B cell (primary cell): ENCODE measurements at regions of chr6 and their contacts with region 1.

Region 1: DNA sequence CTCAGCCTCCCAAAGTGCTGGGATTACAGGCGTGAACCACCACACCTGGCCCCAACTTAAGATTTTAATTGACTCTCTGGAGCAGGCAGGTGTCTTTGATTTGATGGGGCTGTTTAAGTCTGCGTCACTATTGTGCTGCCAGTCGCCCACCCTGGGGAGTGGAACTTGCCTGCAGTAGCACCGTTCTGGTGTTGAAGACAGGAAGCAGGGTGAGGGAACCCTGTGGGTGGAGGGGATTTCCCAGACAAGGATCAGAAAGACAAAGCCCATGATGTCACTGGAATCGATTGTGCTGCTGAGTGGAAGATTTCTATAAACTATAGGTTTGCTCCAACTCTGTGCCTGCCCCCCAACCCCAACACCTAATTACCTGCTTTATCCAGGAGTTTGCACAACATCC is 11.0 kb downstream of the ALDH8A1 start:
- DNase-seq: peak; percentile 38
- ATAC-seq: no peak
- H3K4me3 ChIP-seq: no peak overlapping the region
- H3K4me3 Mint-ChIP-seq: no peak overlapping the region
- H3K27ac ChIP-seq: no peak overlapping the region
- H3K27ac Mint-ChIP-seq: no peak overlapping the region
- H3K4me1 ChIP-seq: peaks cover 5 to 6% of the 10 kb centered on the region in 2 donors
- H3K4me1 Mint-ChIP-seq: no peaks in the 10 kb centered on the region
- H3K27me3 ChIP-seq: no peaks in the 10 kb centered on the region
- H3K27me3 Mint-ChIP-seq: no peaks in the 10 kb centered on the region
- CTCF ChIP-seq: no peak

Region 2: DNA sequence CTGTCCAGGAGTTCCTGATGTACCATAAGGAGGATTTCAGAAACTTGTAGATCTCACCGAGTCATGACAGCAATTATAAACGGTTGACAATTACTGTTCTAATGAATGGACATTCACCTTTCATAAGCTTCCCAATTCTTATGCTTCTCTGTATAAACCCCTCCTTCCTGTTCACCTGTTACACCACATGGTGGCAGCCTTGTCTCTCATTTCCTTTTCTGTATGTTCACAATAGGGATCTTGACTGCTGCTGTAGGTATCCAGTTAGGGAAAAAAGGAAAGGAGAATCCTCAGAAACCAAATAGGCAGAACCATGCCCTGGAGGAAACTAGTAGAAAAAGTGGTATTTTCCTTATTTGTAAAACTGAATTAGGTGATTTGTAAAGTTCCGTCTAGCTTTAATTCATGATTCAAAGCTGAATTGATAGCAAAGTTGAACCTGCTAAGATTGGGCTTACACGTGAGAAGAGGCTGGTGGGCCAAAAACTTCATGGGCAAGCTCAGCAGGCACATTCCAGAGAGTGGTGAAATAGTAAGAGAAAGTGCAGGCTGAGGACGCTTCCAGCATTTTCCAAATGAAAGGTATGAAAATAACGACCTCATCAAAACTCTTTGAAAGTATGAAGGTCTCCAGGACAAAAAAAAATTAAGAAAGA is 1014.8 kb before region 1 on chr6:
- CTCF ChIA-PET with region 1: interaction called, 19 read pairs
- POLR2A ChIA-PET with region 1: no interaction called
- intact Hi-C with region 1: no loop called
- DNase-seq: peak; percentile 77
- ATAC-seq: peak; percentile 88
- H3K4me3 ChIP-seq: no peak overlapping the region
- H3K4me3 Mint-ChIP-seq: no peak overlapping the region
- H3K27ac ChIP-seq: no peak overlapping the region
- H3K27ac Mint-ChIP-seq: no peak overlapping the region
- H3K4me1 ChIP-seq: no peaks in the 10 kb centered on the region
- H3K4me1 Mint-ChIP-seq: no peaks in the 10 kb centered on the region
- H3K27me3 ChIP-seq: peaks cover 0 to 18% (median 4%) of the 10 kb centered on the region in 4 experiments
- H3K27me3 Mint-ChIP-seq: peaks cover 33% of the 10 kb centered on the region
- CTCF ChIP-seq: peak; percentile 90

Region 3: DNA sequence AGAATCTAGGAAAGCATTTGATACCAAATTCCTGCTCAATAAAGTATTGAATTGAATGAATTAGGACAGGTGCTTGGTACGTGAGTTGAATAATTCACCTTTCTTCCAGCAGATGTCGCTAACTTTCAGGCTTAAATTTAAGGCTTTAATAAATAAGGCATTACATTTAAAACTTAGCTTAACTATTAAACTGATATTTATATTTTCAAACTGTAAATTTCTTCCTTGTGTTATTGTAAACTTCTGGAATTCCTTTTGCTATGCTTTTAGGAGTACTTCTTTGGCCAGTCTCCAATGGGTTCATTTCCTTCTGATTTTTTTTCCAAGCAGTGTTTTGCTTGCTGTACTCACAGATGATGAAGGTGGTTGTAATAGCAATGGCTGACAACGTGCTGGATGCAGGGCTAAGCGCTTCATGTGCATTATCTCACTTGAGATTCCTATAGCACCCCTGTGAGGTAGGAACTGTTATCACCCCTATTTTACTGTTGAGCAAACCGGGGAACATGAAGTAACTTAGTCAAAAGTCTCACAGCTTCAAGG is 815.2 kb before region 1 on chr6:
- CTCF ChIA-PET with region 1: interaction called, 110 read pairs
- POLR2A ChIA-PET with region 1: no interaction called
- intact Hi-C with region 1: loop called (anchors 1 kb)
- DNase-seq: peak; percentile 63
- ATAC-seq: peak; percentile 58
- H3K4me3 ChIP-seq: no peak overlapping the region
- H3K4me3 Mint-ChIP-seq: no peak overlapping the region
- H3K27ac ChIP-seq: no peak overlapping the region
- H3K27ac Mint-ChIP-seq: no peak overlapping the region
- H3K4me1 ChIP-seq: no peaks in the 10 kb centered on the region
- H3K4me1 Mint-ChIP-seq: no peaks in the 10 kb centered on the region
- H3K27me3 ChIP-seq: no peaks in the 10 kb centered on the region
- H3K27me3 Mint-ChIP-seq: no peaks in the 10 kb centered on the region
- CTCF ChIP-seq: peak; percentile 90

Region 4: GRCh38 chr6:134161036-134161435 is 777.9 kb before region 1 on chr6:
- CTCF ChIA-PET with region 1: interaction called, 59 read pairs
- POLR2A ChIA-PET with region 1: no interaction called
- intact Hi-C with region 1: loop called (anchors 1 kb)
- DNase-seq: no peak
- ATAC-seq: no peak
- H3K4me3 ChIP-seq: no peak overlapping the region
- H3K4me3 Mint-ChIP-seq: no peak overlapping the region
- H3K27ac ChIP-seq: no peak overlapping the region
- H3K27ac Mint-ChIP-seq: no peak overlapping the region
- H3K4me1 ChIP-seq: no peaks in the 10 kb centered on the region
- H3K4me1 Mint-ChIP-seq: no peaks in the 10 kb centered on the region
- H3K27me3 ChIP-seq: no peaks in the 10 kb centered on the region
- H3K27me3 Mint-ChIP-seq: no peaks in the 10 kb centered on the region
- CTCF ChIP-seq: no peak

Region 5: DNA sequence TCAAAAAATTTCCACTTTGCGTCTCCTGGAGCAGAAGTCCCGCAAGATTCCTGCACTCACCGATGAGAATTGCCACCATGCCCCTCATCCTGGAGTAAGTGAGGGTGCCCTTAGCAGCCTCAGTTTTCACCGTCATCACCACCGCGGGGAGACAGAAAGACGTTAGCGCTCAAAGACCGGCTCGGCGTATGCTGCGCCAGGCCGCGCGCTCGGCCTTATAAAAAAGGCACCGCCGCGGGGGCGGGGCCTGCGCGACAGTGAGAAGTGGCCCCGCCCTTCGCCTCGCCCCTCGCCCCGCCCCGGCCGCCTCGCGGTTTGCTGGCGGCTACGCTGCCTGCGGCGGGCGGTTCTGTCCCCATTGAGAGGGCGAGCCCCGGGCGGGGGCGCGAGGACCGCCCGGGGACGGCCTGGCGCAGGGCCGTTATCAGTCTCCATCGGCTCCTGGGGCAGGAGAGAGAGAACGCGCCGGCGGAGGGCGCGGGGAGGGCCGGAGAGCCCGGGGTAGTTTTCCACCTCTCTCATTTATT is 764.2 kb before region 1 on chr6:
- CTCF ChIA-PET with region 1: interaction called, 19 read pairs
- POLR2A ChIA-PET with region 1: no interaction called
- intact Hi-C with region 1: no loop called
- DNase-seq: peak; percentile 95
- ATAC-seq: peak; percentile 89
- H3K4me3 ChIP-seq: peak overlapping the region; percentile 75 to 97 (median 77)
- H3K4me3 Mint-ChIP-seq: peak overlapping the region; percentile 95
- H3K27ac ChIP-seq: peak overlapping the region; percentile 69 to 70
- H3K27ac Mint-ChIP-seq: peak overlapping the region; percentile 92
- H3K4me1 ChIP-seq: peaks cover 29 to 33% of the 10 kb centered on the region in 2 donors
- H3K4me1 Mint-ChIP-seq: peaks cover 46% of the 10 kb centered on the region
- H3K27me3 ChIP-seq: no peaks in the 10 kb centered on the region
- H3K27me3 Mint-ChIP-seq: peaks cover 12% of the 10 kb centered on the region
- CTCF ChIP-seq: no peak

Region 6: GRCh38 chr6:134822920-134823709 is 115.8 kb before region 1 on chr6:
- CTCF ChIA-PET with region 1: interaction called, 12 read pairs
- POLR2A ChIA-PET with region 1: no interaction called
- intact Hi-C with region 1: no loop called
- DNase-seq: peak; percentile 72
- ATAC-seq: peak; percentile 74
- H3K4me3 ChIP-seq: no peak overlapping the region
- H3K4me3 Mint-ChIP-seq: no peak overlapping the region
- H3K27ac ChIP-seq: no peak overlapping the region
- H3K27ac Mint-ChIP-seq: no peak overlapping the region
- H3K4me1 ChIP-seq: no peaks in the 10 kb centered on the region
- H3K4me1 Mint-ChIP-seq: peaks cover 9% of the 10 kb centered on the region
- H3K27me3 ChIP-seq: no peaks in the 10 kb centered on the region
- H3K27me3 Mint-ChIP-seq: peaks cover 3% of the 10 kb centered on the region
- CTCF ChIP-seq: peak; percentile 77

Region 7: DNA sequence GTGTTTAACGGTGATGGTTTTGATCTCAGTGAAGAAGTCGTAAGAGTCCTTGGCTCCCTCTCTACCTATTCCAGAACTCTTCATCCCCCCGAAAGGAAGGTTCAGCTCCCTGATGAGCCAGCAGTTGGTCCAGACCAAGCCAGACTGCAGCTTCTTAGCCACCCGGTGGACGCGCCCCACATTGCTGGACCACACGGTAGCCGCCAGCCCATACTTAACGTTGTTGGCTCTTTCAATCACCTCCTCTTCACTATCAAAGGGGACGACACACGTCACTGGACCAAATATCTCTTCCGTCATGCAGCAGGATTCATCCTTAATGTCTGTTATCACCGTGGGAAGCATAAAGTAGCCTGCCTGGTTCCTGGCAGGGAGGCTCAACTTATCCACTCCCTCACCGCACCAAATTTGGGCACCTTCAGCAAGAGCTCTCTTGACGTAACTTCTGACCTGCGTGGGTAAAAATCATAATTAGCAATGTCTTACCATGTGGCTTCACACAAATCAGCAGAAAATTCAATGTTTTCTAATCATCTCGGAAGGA is 20.4 kb before region 1 on chr6:
- CTCF ChIA-PET with region 1: interaction called, 23 read pairs
- POLR2A ChIA-PET with region 1: no interaction called
- intact Hi-C with region 1: no loop called
- DNase-seq: no peak
- ATAC-seq: no peak
- H3K4me3 ChIP-seq: no peak overlapping the region
- H3K4me3 Mint-ChIP-seq: no peak overlapping the region
- H3K27ac ChIP-seq: no peak overlapping the region
- H3K27ac Mint-ChIP-seq: no peak overlapping the region
- H3K4me1 ChIP-seq: no peaks in the 10 kb centered on the region
- H3K4me1 Mint-ChIP-seq: no peaks in the 10 kb centered on the region
- H3K27me3 ChIP-seq: no peaks in the 10 kb centered on the region
- H3K27me3 Mint-ChIP-seq: no peaks in the 10 kb centered on the region
- CTCF ChIP-seq: no peak

Region 8: DNA sequence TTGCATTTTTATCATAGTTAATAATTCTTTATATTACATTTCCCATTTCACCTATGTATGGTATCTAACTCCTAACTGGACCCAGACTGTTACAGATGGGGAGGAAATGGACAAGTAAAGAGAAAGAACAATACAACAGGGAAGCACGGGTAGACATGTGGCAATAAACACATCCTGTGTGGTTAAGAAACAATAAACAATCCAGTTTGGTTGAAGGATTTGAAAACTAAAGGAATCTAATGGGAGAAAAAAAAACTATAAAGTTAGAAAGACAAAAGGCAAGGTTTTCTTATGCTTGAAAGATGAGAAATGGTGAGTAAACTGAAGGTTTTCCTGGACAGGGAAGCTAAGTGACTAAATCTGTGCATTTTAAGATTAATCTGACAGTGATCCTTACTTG is 45.9 kb after region 1 on chr6:
- CTCF ChIA-PET with region 1: no interaction called
- POLR2A ChIA-PET with region 1: no interaction called
- intact Hi-C with region 1: no loop called
- DNase-seq: no peak
- ATAC-seq: no peak
- H3K4me3 ChIP-seq: no peak overlapping the region
- H3K4me3 Mint-ChIP-seq: no peak overlapping the region
- H3K27ac ChIP-seq: no peak overlapping the region
- H3K27ac Mint-ChIP-seq: no peak overlapping the region
- H3K4me1 ChIP-seq: no peaks in the 10 kb centered on the region
- H3K4me1 Mint-ChIP-seq: peaks cover 6% of the 10 kb centered on the region
- H3K27me3 ChIP-seq: no peaks in the 10 kb centered on the region
- H3K27me3 Mint-ChIP-seq: no peaks in the 10 kb centered on the region
- CTCF ChIP-seq: no peak